SK-N-SH (cell line): ENCODE measurements at regions of chr14 and their contacts with region 1.

Region 1: DNA sequence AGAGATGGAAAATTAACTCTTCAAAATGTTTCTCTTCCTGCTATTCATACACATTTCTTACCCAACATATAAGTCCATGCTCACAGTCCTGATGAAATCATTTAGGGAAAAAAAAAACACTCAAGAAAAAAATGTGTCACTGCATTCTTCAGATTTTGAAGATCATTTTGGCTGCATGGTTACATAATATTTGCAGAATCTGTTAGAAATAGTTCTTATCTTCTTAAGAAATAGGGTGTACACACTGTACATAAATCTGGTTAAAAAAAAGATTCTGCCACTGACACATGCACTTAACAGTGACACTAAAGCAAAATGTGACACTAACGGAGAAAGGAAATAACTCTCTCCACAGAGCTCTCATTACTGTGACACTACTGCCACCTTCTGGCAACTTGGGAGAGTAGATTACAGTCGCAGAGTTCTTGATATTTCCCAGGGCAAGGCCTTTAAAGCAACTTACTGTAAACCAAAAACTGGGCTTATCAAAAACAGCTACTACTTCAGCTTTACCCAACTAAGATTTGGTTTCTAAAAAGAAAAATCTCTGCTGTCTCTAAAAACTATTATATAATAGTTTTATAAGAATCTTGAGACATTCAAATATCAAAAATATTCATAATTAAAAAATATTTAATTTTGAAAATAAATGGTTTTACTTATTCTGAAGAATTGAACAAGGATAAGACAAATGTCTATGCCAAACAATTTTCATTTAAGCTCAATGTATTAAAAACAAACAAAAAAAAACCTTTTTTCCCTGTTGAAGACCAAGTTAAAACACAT is 65.0 kb downstream of the SETD3 start:
- DNase-seq: peak; percentile 77
- H3K4me3 ChIP-seq: no peak overlapping the region; a peak in 1 of 4 replicates
- H3K27ac ChIP-seq: no peak overlapping the region
- H3K4me1 ChIP-seq: no peaks in the 10 kb centered on the region; a peak in 2 of 4 replicates
- H3K27me3 ChIP-seq: no peaks in the 10 kb centered on the region
- CTCF ChIP-seq: peak; percentile 91
- EP300 ChIP-seq: no peak
- RAD21 ChIP-seq: peak; percentile 87

Region 2: DNA sequence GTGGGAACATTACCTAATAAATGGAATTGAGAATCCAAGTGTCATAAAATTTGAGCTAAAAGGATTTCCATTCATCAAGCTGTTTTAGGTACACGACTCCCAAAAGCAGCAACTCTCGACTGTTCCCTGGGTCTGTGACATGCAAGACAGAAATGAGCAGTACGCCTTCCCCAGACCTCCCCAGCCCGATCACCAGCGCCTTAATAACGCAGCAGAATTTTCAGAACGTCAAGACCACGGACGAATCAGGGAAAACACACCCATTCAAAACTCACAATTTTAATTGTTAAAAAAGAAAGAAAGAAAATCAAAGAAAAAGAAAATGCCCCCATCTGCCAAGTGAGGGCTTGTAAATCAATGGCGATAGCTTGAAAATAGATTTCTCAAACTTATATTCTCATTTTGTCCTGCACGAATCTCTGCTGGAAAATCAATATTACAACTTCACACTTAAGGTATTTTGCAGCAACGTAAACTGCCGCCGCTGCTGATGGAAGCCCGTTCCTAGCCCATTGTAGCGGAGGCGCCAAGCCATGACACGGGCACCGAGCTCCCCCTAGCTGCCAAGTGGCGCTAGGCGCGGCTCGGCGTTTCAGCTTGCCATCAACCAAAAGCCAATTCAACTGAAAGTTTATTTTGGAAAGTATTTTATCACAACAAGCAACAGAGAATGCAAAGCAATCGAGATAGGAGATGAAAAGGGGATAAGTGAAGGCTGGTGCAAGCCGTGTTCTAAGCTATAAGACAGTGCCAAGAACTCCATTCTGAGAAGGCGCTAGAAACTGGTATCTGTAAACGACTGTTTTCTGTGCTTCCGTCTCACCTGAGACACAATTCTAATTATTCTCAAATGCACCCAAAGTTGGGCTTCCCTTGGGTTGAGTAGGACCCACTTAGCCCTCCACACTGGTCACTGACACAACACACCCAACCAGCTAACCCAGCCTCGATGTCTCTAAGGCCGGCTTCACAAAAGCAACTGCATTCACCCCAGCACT is 149.2 kb before region 1 on chr14:
- CTCF ChIA-PET with region 1: interaction called, 17 read pairs
- POLR2A ChIA-PET with region 1: no interaction called
- DNase-seq: peak; percentile 82
- H3K4me3 ChIP-seq: peak overlapping the region in 1 of 2 experiments; percentile 38; a peak in 1 of 4 replicates
- H3K27ac ChIP-seq: no peak overlapping the region
- H3K4me1 ChIP-seq: no peaks in the 10 kb centered on the region; a peak in 2 of 4 replicates
- H3K27me3 ChIP-seq: peaks cover 76% of the 10 kb centered on the region
- CTCF ChIP-seq: peak; percentile 99
- EP300 ChIP-seq: no peak
- RAD21 ChIP-seq: peak; percentile 95

Region 3: GRCh38 chr14:99378782-99379214 is 36.9 kb before region 1 on chr14:
- CTCF ChIA-PET with region 1: interaction called, 14 read pairs
- POLR2A ChIA-PET with region 1: no interaction called
- DNase-seq: no peak
- H3K4me3 ChIP-seq: no peak overlapping the region
- H3K27ac ChIP-seq: no peak overlapping the region
- H3K4me1 ChIP-seq: no peaks in the 10 kb centered on the region
- H3K27me3 ChIP-seq: peaks cover 11% of the 10 kb centered on the region
- CTCF ChIP-seq: no peak
- EP300 ChIP-seq: no peak
- RAD21 ChIP-seq: no peak

Region 4: DNA sequence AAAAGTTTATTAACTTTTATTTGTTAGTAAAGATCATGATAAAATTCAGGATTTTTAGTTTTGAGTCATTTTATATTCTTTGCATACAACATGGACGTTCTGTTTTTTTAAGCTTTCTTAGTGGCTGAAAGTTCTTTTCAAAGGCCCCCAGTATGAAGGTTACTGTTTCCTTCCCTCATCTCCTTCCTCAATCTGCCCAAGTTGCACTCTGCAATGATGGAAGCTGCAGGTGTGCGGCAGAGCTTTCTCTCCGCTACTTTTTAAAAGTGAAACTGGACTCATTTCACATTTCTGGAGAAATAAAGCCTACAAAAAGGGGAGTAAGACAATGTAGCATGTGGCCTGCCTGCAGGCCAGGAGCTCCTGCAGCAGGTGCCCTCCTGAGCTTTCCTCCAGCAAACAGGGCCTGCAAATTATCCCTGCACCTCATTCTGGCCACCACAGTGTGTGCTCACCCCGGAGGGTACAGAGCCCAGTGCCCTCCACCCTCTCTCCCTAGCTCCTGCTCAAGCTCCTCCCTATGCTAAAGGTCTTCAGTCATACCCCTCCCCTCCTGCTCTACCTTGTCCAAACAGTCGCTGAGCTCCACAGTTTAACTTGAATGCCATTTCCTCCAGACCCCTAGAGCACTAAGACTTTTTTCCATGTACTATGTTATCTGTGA is 13.9 kb before region 1 on chr14:
- CTCF ChIA-PET with region 1: interaction called, 64 read pairs
- POLR2A ChIA-PET with region 1: no interaction called
- DNase-seq: no peak
- H3K4me3 ChIP-seq: no peak overlapping the region
- H3K27ac ChIP-seq: no peak overlapping the region
- H3K4me1 ChIP-seq: no peaks in the 10 kb centered on the region
- H3K27me3 ChIP-seq: no peaks in the 10 kb centered on the region
- CTCF ChIP-seq: no peak
- EP300 ChIP-seq: no peak
- RAD21 ChIP-seq: no peak

Region 5: GRCh38 chr14:99435327-99435726 is 19.6 kb after region 1 on chr14:
- CTCF ChIA-PET with region 1: interaction called, 11 read pairs
- POLR2A ChIA-PET with region 1: no interaction called
- DNase-seq: no peak
- H3K4me3 ChIP-seq: no peak overlapping the region
- H3K27ac ChIP-seq: no peak overlapping the region
- H3K4me1 ChIP-seq: no peaks in the 10 kb centered on the region
- H3K27me3 ChIP-seq: no peaks in the 10 kb centered on the region
- CTCF ChIP-seq: no peak
- EP300 ChIP-seq: no peak
- RAD21 ChIP-seq: no peak

Region 6: DNA sequence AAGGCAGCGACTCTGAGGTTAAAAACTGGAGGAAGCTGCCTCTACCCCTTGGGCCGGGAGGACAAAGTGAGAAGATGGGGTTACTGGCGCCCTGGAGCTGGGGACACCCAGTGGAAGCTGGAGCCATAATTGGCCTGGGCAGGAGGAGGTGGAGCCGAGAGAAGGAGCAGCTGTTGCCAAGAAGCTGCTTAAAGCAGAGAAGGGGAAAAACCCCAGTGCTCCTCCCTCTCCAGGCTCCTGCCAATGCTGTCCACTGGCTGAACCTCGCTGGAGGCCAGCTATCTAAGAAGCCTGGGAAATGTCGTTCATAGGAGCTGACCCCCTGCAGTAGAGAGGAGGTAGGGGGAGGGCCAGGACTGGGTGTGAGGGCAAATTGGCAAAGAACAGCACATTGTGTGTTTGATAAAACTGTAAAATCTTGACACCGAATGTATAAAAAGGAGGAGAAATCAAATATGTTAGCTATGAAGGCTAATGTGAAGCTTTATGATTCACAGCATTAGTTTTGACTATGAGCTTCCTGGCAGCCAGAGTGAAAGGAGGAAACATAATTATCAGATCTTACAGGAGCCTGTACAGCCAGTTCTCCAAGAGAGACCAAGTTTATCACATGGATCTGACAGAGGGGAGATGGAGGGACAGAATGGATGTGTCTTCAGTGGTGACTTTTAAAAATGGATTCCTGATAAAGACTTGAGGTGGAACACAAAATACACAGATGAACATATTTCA is 238.7 kb after region 1 on chr14:
- CTCF ChIA-PET with region 1: no interaction called
- POLR2A ChIA-PET with region 1: no interaction called
- DNase-seq: no peak
- H3K4me3 ChIP-seq: no peak overlapping the region
- H3K27ac ChIP-seq: no peak overlapping the region
- H3K4me1 ChIP-seq: no peaks in the 10 kb centered on the region; a peak in 1 of 4 replicates
- H3K27me3 ChIP-seq: no peaks in the 10 kb centered on the region
- CTCF ChIP-seq: no peak; the same call in 1 of the 2 replicates
- EP300 ChIP-seq: no peak
- RAD21 ChIP-seq: no peak